ENCODE measurements at regions of chr3 and their contacts with region 1.

Region 1: GRCh38 chr3:104635872-104636580 is 730.7 kb upstream of the ALCAM start:
- DNase-seq: no peak
- ATAC-seq: no peak
- H3K4me3 ChIP-seq: no peak overlapping the region
- H3K4me3 Mint-ChIP-seq: no peak overlapping the region
- H3K27ac ChIP-seq: no peak overlapping the region
- H3K27ac Mint-ChIP-seq: no peak overlapping the region
- H3K4me1 ChIP-seq: no peaks in the 10 kb centered on the region
- H3K4me1 Mint-ChIP-seq: no peaks in the 10 kb centered on the region
- H3K27me3 ChIP-seq: no peaks in the 10 kb centered on the region
- H3K27me3 Mint-ChIP-seq: peaks cover 2% of the 10 kb centered on the region
- CTCF ChIP-seq: no peak

Region 2: GRCh38 chr3:104648823-104649222 is 12.8 kb after region 1 on chr3:
- CTCF ChIA-PET with region 1: no interaction called
- POLR2A ChIA-PET with region 1: no interaction called
- intact Hi-C with region 1: loop called in 1 of 2 experiments (anchors 2 kb)
- DNase-seq: no peak
- ATAC-seq: no peak
- H3K4me3 ChIP-seq: no peak overlapping the region
- H3K4me3 Mint-ChIP-seq: no peak overlapping the region
- H3K27ac ChIP-seq: no peak overlapping the region
- H3K27ac Mint-ChIP-seq: no peak overlapping the region
- H3K4me1 ChIP-seq: no peaks in the 10 kb centered on the region
- H3K4me1 Mint-ChIP-seq: no peaks in the 10 kb centered on the region
- H3K27me3 ChIP-seq: no peaks in the 10 kb centered on the region
- H3K27me3 Mint-ChIP-seq: no peaks in the 10 kb centered on the region
- CTCF ChIP-seq: no peak

Measured in CD8-positive, alpha-beta T cell (primary cell).